ENCODE measurements at regions of chr7 and their contacts with region 1.

Region 1: GRCh38 chr7:99829524-99830160 is 1.8 kb downstream of the CYP3A43 start:
- DNase-seq: no peak
- H3K4me3 Mint-ChIP-seq: no peak overlapping the region
- H3K27ac Mint-ChIP-seq: no peak overlapping the region
- H3K4me1 Mint-ChIP-seq: peaks cover 45% of the 10 kb centered on the region
- H3K27me3 Mint-ChIP-seq: no peaks in the 10 kb centered on the region
- CTCF ChIP-seq: no peak

Region 2: GRCh38 chr7:99729501-99730237 is 100.0 kb before region 1 on chr7:
- CTCF ChIA-PET with region 1: no interaction called
- POLR2A ChIA-PET with region 1: interaction called, 11 read pairs
- intact Hi-C with region 1: no loop called
- DNase-seq: peak; percentile 85
- H3K4me3 Mint-ChIP-seq: no peak overlapping the region
- H3K27ac Mint-ChIP-seq: no peak overlapping the region
- H3K4me1 Mint-ChIP-seq: no peaks in the 10 kb centered on the region
- H3K27me3 Mint-ChIP-seq: no peaks in the 10 kb centered on the region
- CTCF ChIP-seq: no peak

Region 3: GRCh38 chr7:99868246-99868645 is 38.6 kb after region 1 on chr7:
- CTCF ChIA-PET with region 1: no interaction called
- POLR2A ChIA-PET with region 1: no interaction called
- intact Hi-C with region 1: no loop called
- DNase-seq: no peak
- H3K4me3 Mint-ChIP-seq: no peak overlapping the region
- H3K27ac Mint-ChIP-seq: no peak overlapping the region
- H3K4me1 Mint-ChIP-seq: no peaks in the 10 kb centered on the region
- H3K27me3 Mint-ChIP-seq: no peaks in the 10 kb centered on the region
- CTCF ChIP-seq: no peak

Measured in MCF 10A (cell line).